Calu3 (cell line): ENCODE measurements at regions of chr7 and their contacts with region 1.

Region 1: GRCh38 chr7:105309235-105310169 is 79.2 kb downstream of the SRPK2 start:
- DNase-seq: no peak
- H3K4me3 Mint-ChIP-seq: no peak overlapping the region
- H3K27ac Mint-ChIP-seq: no peak overlapping the region
- H3K4me1 Mint-ChIP-seq: peaks cover 36% of the 10 kb centered on the region
- H3K27me3 Mint-ChIP-seq: no peaks in the 10 kb centered on the region
- CTCF ChIP-seq: no peak

Region 2: GRCh38 chr7:105185290-105186010 is 124.1 kb before region 1 on chr7:
- CTCF ChIA-PET with region 1: interaction called, 11 read pairs
- intact Hi-C with region 1: no loop called
- DNase-seq: no peak
- H3K4me3 Mint-ChIP-seq: no peak overlapping the region
- H3K27ac Mint-ChIP-seq: no peak overlapping the region
- H3K4me1 Mint-ChIP-seq: no peaks in the 10 kb centered on the region
- H3K27me3 Mint-ChIP-seq: no peaks in the 10 kb centered on the region
- CTCF ChIP-seq: no peak

Region 3: GRCh38 chr7:105830391-105831301 is 521.1 kb after region 1 on chr7:
- CTCF ChIA-PET with region 1: no interaction called
- intact Hi-C with region 1: no loop called
- DNase-seq: peak; percentile 20
- H3K4me3 Mint-ChIP-seq: no peak overlapping the region
- H3K27ac Mint-ChIP-seq: no peak overlapping the region
- H3K4me1 Mint-ChIP-seq: peaks cover 12% of the 10 kb centered on the region
- H3K27me3 Mint-ChIP-seq: no peaks in the 10 kb centered on the region
- CTCF ChIP-seq: no peak